Activated T-helper 1 cell treated with anti-CD3 and anti-CD28 coated beads, Interleukin-12 subunit alpha, Interleukin-12 subunit beta, Interleukin-2, Interleukin-4 antibody, amounts not matched to agents 30 ng/mL and 10 ng/mL and 1 ng/mL, durations not matched to agents 14 hours and 24 hours and 36 hours (primary cell): ENCODE measurements at regions of chr2 and their contacts with region 1.

Region 1: DNA sequence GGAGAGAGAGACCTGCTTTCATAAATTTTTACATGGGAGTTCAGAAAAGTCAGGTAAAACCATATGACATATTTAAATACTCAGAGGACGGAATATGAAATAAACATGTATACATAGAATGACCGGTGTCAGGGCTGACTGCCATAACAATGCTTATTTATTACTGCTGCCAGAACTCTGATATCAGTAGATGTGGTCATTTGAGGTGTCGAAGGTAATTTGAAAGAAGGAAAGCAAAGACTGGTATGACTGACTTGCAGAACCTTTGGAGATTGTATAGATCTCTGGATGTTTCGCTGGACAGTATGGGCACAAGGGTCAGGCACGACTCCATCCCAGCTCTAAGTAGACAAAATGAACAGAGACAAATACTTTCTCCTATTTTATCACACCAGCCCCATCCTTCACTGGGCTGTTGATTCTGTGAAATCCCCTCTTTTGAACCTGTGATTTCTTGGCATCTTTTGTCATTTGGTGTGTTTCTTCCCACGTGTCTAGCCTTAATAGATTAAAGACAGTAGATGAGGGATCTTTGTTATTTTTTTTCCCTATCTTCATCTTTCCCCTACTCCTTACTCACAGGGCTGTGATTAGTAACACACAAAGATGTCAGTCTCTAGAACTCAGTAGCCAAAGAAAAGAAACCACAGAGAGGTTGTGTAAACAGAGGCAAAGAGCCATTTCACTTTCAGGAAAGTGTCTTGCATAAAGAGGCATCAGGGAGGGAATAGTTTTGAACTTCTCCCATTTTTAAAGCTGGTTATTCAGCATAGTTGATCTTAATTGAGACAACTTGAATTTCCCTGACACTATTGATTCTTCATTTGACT is 61.6 kb downstream of the ICOS start:
- DNase-seq: no peak
- H3K4me3 Mint-ChIP-seq: peak overlapping the region; percentile 47
- H3K27ac Mint-ChIP-seq: peak overlapping the region; percentile 83
- H3K4me1 Mint-ChIP-seq: peaks cover 66% of the 10 kb centered on the region
- H3K27me3 Mint-ChIP-seq: no peaks in the 10 kb centered on the region

Region 2: GRCh38 chr2:203893401-203893800 is 104.8 kb before region 1 on chr2:
- intact Hi-C with region 1: loop called (anchors 2 kb)
- DNase-seq: no peak
- H3K4me3 Mint-ChIP-seq: no peak overlapping the region
- H3K27ac Mint-ChIP-seq: peak overlapping the region; percentile 89
- H3K4me1 Mint-ChIP-seq: peaks cover 73% of the 10 kb centered on the region
- H3K27me3 Mint-ChIP-seq: no peaks in the 10 kb centered on the region

Region 3: GRCh38 chr2:203951366-203951902 is 46.8 kb before region 1 on chr2:
- intact Hi-C with region 1: loop called (anchors 1 kb)
- DNase-seq: peak; percentile 34
- H3K4me3 Mint-ChIP-seq: peak overlapping the region; percentile 85
- H3K27ac Mint-ChIP-seq: peak overlapping the region; percentile 92
- H3K4me1 Mint-ChIP-seq: peaks cover 85% of the 10 kb centered on the region
- H3K27me3 Mint-ChIP-seq: no peaks in the 10 kb centered on the region

Region 4: DNA sequence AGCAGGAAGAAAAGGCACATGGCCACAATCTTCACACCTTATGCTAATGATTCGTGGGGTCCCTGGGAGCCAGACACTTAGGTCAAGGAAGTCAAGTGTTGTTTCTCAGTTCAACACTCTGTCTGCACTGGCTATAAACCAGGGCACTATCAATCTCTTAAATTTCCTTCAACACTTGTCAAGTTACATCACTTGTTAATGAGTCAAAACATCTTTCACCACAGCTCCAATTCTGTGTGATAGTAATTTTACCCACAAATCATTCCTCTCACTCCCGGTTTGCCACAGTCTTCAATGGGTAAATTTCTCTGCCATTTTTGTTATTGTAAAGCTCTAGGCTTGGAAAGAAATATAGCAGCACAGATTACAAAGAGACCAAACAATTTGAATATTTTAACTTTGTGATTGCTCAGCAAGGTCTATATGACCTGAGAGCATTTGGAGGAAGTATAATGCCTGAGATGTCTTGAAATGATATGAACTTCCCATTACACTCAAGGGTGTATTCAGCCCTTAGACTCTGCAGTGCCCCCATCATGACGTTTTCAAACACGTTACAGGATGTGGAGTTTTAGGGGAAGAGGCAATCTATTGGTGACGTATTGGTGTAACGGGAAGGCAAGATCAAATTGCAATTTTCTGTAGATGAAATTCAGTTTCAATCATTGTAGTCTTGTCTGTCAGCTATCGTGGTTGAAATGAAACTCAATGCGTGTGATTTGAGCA is 17.1 kb after region 1 on chr2:
- intact Hi-C with region 1: loop called (anchors 1 kb)
- DNase-seq: no peak
- H3K4me3 Mint-ChIP-seq: peak overlapping the region; percentile 27
- H3K27ac Mint-ChIP-seq: peak overlapping the region; percentile 73
- H3K4me1 Mint-ChIP-seq: peaks cover 90% of the 10 kb centered on the region
- H3K27me3 Mint-ChIP-seq: no peaks in the 10 kb centered on the region